ENCODE measurements at regions of chr3 and their contacts with region 1.

Region 1: GRCh38 chr3:11155341-11156025 is 1.2 kb downstream of the HRH1 start:
- DNase-seq: peak; percentile 79
- H3K4me3 Mint-ChIP-seq: peak overlapping the region; percentile 48
- H3K27ac Mint-ChIP-seq: peak overlapping the region; percentile 9
- H3K4me1 Mint-ChIP-seq: peaks cover 22% of the 10 kb centered on the region
- H3K27me3 Mint-ChIP-seq: no peaks in the 10 kb centered on the region
- CTCF ChIP-seq: peak; percentile 46

Region 2: DNA sequence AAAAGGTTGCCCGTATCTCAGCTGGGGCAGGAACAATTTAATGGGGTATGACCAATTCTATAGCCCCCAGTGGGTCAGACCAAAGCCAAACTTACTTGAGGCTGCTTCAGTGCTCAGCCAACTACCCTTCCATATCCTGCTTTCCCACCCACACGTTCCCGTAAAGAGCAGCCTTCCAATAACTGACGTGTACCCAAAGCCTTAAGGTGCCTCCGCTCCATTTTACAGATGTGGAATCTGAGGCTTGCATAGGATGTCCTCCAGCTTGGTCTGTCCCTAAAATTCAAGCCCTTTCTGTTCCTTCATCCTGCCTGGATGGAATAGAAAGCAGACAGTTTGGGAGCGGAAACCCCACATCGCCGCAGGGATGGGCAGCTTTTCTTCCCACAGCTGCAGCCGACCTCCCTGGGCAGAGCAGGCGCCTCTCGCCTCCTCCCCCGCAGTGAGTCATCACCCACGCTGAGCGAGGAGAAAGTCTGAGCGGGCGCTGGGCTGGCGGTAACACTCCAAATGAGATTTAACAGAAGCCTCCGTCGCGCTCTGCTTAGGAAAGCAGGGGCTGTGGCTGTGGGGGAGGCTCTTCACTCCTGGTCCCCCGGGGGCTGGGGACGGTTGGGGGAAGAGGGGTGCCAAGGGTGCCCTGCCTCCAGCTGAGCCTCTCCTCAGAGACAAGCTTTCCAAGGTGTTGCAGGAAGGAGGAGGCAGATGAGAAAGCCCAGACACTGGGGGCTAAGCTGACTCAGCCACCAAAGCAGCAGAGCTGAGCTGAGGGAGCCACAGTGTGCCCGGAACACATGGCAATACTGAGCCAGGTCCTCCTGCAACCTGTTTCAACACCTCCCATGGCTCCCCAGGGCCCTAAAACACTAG is 59.0 kb before region 1 on chr3:
- CTCF ChIA-PET with region 1: interaction called, 4 read pairs
- POLR2A ChIA-PET with region 1: interaction called, 3 read pairs
- intact Hi-C with region 1: loop called (anchors 1 kb)
- DNase-seq: peak; percentile 95
- H3K4me3 Mint-ChIP-seq: peak overlapping the region; percentile 71
- H3K27ac Mint-ChIP-seq: peak overlapping the region; percentile 78
- H3K4me1 Mint-ChIP-seq: peaks cover 11% of the 10 kb centered on the region
- H3K27me3 Mint-ChIP-seq: no peaks in the 10 kb centered on the region
- CTCF ChIP-seq: peak; percentile 1

Region 3: DNA sequence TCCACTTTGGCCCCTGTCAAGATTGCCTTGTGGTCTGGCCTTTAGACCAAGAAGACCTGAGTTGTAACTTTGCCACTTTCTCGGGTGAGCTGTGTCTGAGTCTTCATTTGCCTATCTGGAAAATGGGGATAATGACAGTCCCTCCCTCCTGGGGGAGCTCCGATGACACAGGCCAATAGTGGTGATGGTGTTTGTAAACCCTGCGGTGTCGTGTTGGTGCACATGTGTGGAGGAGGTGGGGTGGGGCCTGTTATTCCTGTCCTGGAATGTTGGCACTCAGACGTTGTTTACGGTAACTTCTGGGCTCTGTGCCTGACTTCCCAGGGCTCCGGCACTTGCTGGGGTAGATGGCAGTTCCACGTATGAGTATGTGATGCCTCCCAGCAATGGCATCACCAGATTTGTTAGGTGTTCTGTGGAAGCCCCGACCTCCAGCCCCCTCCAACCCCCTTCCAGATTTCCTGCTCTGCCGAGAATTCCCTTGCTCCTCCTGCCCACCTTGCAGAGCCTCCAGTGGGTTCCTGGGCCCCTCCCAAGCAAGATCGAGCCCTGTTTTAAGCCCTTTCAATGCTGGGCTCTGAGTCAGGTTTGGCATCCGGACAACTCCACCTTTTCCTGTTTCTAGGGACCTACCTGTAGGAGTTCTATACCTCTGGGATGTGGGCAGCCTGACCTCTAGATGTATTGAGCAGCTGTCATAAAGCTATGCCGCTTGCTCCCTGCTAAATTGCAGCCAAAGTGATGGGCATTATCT is 30.3 kb after region 1 on chr3:
- CTCF ChIA-PET with region 1: interaction called, 9 read pairs
- POLR2A ChIA-PET with region 1: interaction called, 6 read pairs
- intact Hi-C with region 1: loop called (anchors 1 kb)
- DNase-seq: peak; percentile 99
- H3K4me3 Mint-ChIP-seq: peak overlapping the region; percentile 75
- H3K27ac Mint-ChIP-seq: peak overlapping the region; percentile 100
- H3K4me1 Mint-ChIP-seq: peaks cover 36% of the 10 kb centered on the region
- H3K27me3 Mint-ChIP-seq: no peaks in the 10 kb centered on the region
- CTCF ChIP-seq: no peak

Region 4: GRCh38 chr3:11201246-11202024 is 46.0 kb after region 1 on chr3:
- CTCF ChIA-PET with region 1: interaction called, 30 read pairs
- POLR2A ChIA-PET with region 1: interaction called, 4 read pairs
- intact Hi-C with region 1: loop called (anchors 1 kb)
- DNase-seq: peak; percentile 76
- H3K4me3 Mint-ChIP-seq: peak overlapping the region; percentile 10
- H3K27ac Mint-ChIP-seq: peak overlapping the region; percentile 89
- H3K4me1 Mint-ChIP-seq: peaks cover 25% of the 10 kb centered on the region
- H3K27me3 Mint-ChIP-seq: no peaks in the 10 kb centered on the region
- CTCF ChIP-seq: no peak

Region 5: GRCh38 chr3:11288786-11289682 is 133.6 kb after region 1 on chr3:
- CTCF ChIA-PET with region 1: interaction called, 7 read pairs
- POLR2A ChIA-PET with region 1: interaction called, 7 read pairs
- intact Hi-C with region 1: loop called (anchors 2 kb)
- DNase-seq: peak; percentile 93
- H3K4me3 Mint-ChIP-seq: peak overlapping the region; percentile 40
- H3K27ac Mint-ChIP-seq: peak overlapping the region; percentile 89
- H3K4me1 Mint-ChIP-seq: peaks cover 39% of the 10 kb centered on the region
- H3K27me3 Mint-ChIP-seq: no peaks in the 10 kb centered on the region
- CTCF ChIP-seq: no peak